Left colon (tissue), 2 donors: ENCODE measurements at regions of chr11 and their contacts with region 1.

Region 1: GRCh38 chr11:83836883-83837654 is 550.9 kb upstream of the CCDC90B start:
- DNase-seq: peak in 1 of 2 donors; percentile 11
- ATAC-seq: peak; percentile 60

Region 2: GRCh38 chr11:83728281-83728680 is 108.8 kb before region 1 on chr11:
- intact Hi-C with region 1: no loop called
- DNase-seq: no peak
- ATAC-seq: no peak

Region 3: DNA sequence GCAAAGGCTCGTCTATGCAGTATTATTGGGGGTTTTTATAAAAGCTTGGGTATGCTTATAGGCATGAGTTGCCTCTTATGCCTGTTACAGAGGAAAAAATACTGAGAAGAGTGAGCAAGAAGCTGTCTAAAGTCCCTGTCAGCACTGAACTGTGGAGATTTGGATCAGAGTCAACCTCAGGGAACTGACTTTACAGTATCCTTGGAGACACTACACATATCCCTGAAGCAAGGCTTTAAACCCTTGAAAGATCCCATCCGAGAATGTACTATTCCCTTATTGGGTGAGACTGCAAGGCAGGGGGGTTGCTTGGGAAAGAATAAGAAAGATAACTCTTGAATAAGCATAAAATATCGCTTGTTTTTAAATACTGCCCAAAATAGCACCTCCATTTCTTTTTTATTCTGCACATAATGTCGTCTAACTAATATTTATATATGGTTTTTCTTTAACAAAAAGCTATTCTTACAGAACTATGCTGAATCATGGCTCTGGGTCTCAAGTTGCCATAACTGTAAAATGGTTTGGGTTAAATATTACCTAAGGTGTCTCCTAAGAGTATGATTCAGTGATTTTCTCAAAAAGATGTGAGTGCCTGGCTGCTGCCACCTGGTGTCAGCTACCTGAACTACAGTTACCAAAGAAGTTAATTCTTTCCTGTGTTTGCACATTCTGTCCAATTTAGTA is 727.3 kb after region 1 on chr11:
- intact Hi-C with region 1: loop called in 1 of 2 experiments (anchors 10 kb)
- DNase-seq: peak in 1 of 2 donors; percentile 41
- ATAC-seq: peak; percentile 90